Heart right ventricle (tissue), 16 donors: ENCODE measurements at regions of chr22 and their contacts with region 1.

Region 1: DNA sequence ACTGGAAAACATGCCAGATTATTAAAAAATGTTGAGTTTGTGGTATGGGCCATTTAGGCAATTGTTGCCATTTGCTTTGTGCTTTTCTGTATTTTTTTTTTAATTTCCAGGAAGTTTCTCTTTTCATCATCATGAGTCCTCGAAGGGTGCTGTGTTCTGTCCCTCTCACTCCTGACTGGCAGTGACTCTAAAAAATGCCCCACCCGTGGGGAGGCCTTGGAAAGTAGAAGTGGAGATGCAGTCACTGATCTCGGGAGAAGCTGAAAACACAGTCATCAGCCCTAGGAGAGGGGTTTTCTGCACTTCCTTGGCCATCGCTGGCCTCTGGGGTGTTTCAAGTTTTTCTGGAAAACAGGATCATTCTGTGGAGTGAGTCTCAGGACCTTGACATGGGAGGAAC is 98.5 kb upstream of the GRK3 start:
- DNase-seq: no peak
- ATAC-seq: no peak
- H3K4me3 ChIP-seq: no peak overlapping the region
- H3K27ac ChIP-seq: no peak overlapping the region
- H3K4me1 ChIP-seq: peaks cover 0 to 4% (median 0%) of the 10 kb centered on the region in 9 donors
- H3K27me3 ChIP-seq: no peaks in the 10 kb centered on the region
- CTCF ChIP-seq: no peak

Region 2: GRCh38 chr22:25696763-25697667 is 231.1 kb after region 1 on chr22:
- intact Hi-C with region 1: loop called (anchors 1 to 5 kb)
- DNase-seq: no peak
- ATAC-seq: no peak
- H3K4me3 ChIP-seq: no peak overlapping the region
- H3K27ac ChIP-seq: no peak overlapping the region
- H3K4me1 ChIP-seq: peaks cover 0 to 29% (median 24%) of the 10 kb centered on the region in 9 donors
- H3K27me3 ChIP-seq: no peaks in the 10 kb centered on the region
- CTCF ChIP-seq: no peak

Region 3: GRCh38 chr22:25702040-25702439 is 236.1 kb after region 1 on chr22:
- intact Hi-C with region 1: loop called (anchors 1 to 5 kb)
- DNase-seq: no peak
- ATAC-seq: peak in 5 of 8 donors; percentile 46 to 76 (median 53)
- H3K4me3 ChIP-seq: no peak overlapping the region
- H3K27ac ChIP-seq: peak overlapping the region in 2 of 10 donors; percentile 37 to 51
- H3K4me1 ChIP-seq: peaks cover 0 to 31% (median 16%) of the 10 kb centered on the region in 9 donors
- H3K27me3 ChIP-seq: no peaks in the 10 kb centered on the region
- CTCF ChIP-seq: peak in 8 of 9 donors; percentile 23 to 70 (median 52)

Region 4: GRCh38 chr22:25772288-25772687 is 306.3 kb after region 1 on chr22:
- intact Hi-C with region 1: loop called (anchors 2 to 5 kb)
- DNase-seq: no peak
- ATAC-seq: peak in 1 of 8 donors; percentile 11
- H3K4me3 ChIP-seq: no peak overlapping the region
- H3K27ac ChIP-seq: no peak overlapping the region
- H3K4me1 ChIP-seq: peaks cover 0 to 3% (median 0%) of the 10 kb centered on the region in 9 donors
- H3K27me3 ChIP-seq: no peaks in the 10 kb centered on the region
- CTCF ChIP-seq: no peak